Brain microvascular endothelial cell (primary cell): ENCODE measurements at regions of chr3 and their contacts with region 1.

Region 1: GRCh38 chr3:115217678-115218451 is 70.8 kb upstream of the ZBTB20 start:
- DNase-seq: peak; percentile 70
- H3K4me3 ChIP-seq: no peak overlapping the region
- H3K27ac ChIP-seq: peak overlapping the region; percentile 77
- H3K27me3 ChIP-seq: no peaks in the 10 kb centered on the region
- CTCF ChIP-seq: peak; percentile 67

Region 2: GRCh38 chr3:114994554-114995341 is 223.1 kb before region 1 on chr3:
- in situ Hi-C with region 1: no loop called
- DNase-seq: no peak
- H3K4me3 ChIP-seq: no peak overlapping the region
- H3K27ac ChIP-seq: no peak overlapping the region
- H3K27me3 ChIP-seq: no peaks in the 10 kb centered on the region
- CTCF ChIP-seq: no peak

Region 3: GRCh38 chr3:115658337-115659181 is 440.7 kb after region 1 on chr3:
- in situ Hi-C with region 1: loop called (anchors 25 kb)
- DNase-seq: peak; percentile 81
- H3K4me3 ChIP-seq: peak overlapping the region; percentile 61
- H3K27ac ChIP-seq: peak overlapping the region; percentile 82
- H3K27me3 ChIP-seq: no peaks in the 10 kb centered on the region
- CTCF ChIP-seq: no peak

Region 4: GRCh38 chr3:115819785-115820384 is 602.0 kb after region 1 on chr3:
- in situ Hi-C with region 1: loop called (anchors 25 kb)
- DNase-seq: peak; percentile 81
- H3K4me3 ChIP-seq: no peak overlapping the region
- H3K27ac ChIP-seq: no peak overlapping the region
- H3K27me3 ChIP-seq: no peaks in the 10 kb centered on the region
- CTCF ChIP-seq: peak; percentile 93